ENCODE measurements at regions of chr1 and their contacts with region 1.

Region 1: DNA sequence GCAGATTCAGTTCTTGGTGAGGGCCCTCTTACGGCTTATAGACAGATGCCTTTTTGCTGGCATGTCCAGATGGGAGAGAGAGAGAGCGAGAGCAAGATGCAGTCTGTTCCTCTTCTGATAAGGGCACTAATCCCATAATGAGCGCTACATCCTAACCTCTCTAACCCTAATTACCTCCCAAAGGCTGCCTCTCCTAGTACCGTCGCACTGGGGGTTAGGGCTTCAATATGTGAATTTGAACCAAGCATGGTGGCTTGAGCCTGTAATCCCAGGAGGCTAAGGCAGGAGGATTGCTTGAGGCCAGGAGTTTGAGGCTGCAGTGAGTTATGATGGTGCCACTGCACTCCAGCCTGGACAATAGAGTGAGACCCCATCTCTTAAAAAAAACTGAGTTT is 10.5 kb upstream of the SDE2 start:
- DNase-seq: no peak
- ATAC-seq: no peak
- H3K4me3 ChIP-seq: no peak overlapping the region
- H3K27ac ChIP-seq: no peak overlapping the region
- H3K4me1 ChIP-seq: peaks cover 0 to 3% (median 0%) of the 10 kb centered on the region in 9 donors
- H3K27me3 ChIP-seq: no peaks in the 10 kb centered on the region
- CTCF ChIP-seq: no peak

Region 2: DNA sequence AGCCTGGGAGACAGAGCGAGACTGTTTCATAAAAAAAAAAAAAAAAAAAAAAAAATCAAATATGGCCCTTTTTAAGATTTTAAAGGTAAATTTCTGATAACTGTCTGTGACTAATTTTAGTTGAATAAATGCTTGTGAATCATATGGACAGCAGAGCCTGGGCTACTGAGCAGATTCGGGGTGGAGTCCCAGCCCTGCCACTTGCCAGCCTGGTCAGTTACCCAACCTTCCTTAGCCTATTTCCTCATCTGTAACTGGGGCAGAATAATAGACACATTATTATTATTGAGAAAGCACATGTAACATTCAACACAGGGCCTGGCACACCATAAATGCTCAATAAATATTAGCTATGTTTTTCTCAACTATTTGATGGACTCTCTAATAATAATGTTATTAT is 41.7 kb after region 1 on chr1:
- intact Hi-C with region 1: loop called in 2 of 10 experiments (anchors 5 kb)
- DNase-seq: no peak
- ATAC-seq: peak in 1 of 8 donors; percentile 65
- H3K4me3 ChIP-seq: no peak overlapping the region
- H3K27ac ChIP-seq: no peak overlapping the region
- H3K4me1 ChIP-seq: peaks cover 0 to 11% (median 0%) of the 10 kb centered on the region in 9 donors
- H3K27me3 ChIP-seq: no peaks in the 10 kb centered on the region
- CTCF ChIP-seq: no peak

Measured in heart right ventricle (tissue), 16 donors.